ENCODE measurements at regions of chr6 and their contacts with region 1.

Region 1: DNA sequence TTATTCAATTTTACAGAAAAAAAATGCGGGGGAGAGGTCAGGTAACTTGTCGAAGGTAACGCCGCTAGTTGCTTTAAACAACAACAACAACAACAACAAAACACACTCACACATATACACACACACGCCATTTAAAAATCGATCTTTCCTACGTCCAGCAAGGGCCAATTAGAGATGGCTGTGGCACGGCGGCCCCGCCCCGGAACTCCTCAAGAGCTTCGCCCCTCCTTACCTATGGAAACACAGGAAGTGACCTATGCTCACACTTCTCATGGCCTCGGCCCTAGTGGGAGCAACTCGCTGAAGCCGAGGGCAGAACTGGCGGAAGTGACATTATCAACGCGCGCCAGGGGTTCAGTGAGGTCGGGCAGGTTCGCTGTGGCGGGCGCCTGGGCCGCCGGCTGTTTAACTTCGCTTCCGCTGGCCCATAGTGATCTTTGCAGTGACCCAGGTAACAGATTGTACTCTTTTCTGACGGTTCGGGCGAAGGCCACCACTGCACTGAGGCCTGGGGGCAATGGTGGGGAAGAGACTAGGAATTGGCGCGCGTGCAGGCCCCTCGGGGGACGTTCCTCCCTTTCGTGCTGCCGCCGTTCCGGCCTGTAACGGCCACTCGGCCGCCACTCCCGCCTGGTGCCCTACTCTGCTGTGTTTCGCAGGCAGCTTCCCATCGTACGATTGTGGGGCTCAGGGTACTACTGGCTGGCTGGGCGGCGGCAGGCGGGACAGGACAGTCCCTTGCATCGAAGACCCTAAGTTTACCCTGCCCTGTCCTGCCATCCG is at the start of gene TBP:
- DNase-seq: peak; percentile 93
- ATAC-seq: peak; percentile 94
- H3K4me3 Mint-ChIP-seq: no peak within 1 kb of the TSS
- H3K27ac Mint-ChIP-seq: no peak within 1 kb of the TSS
- H3K4me1 Mint-ChIP-seq: peaks cover 25% of the 10 kb centered on the region
- H3K27me3 Mint-ChIP-seq: no peaks in the 10 kb centered on the region
- CTCF ChIP-seq: no peak
- total RNA-seq, gene TBP: 19.4 and 21.6 TPM in 2 replicates

Region 2: GRCh38 chr6:168596344-168596743 is 1957.9 kb before region 1 on chr6:
- CTCF ChIA-PET with region 1: no interaction called
- POLR2A ChIA-PET with region 1: no interaction called
- intact Hi-C with region 1: no loop called
- DNase-seq: no peak
- ATAC-seq: no peak
- H3K4me3 Mint-ChIP-seq: no peak overlapping the region
- H3K27ac Mint-ChIP-seq: no peak overlapping the region
- H3K4me1 Mint-ChIP-seq: no peaks in the 10 kb centered on the region
- H3K27me3 Mint-ChIP-seq: no peaks in the 10 kb centered on the region
- CTCF ChIP-seq: no peak

Region 3: DNA sequence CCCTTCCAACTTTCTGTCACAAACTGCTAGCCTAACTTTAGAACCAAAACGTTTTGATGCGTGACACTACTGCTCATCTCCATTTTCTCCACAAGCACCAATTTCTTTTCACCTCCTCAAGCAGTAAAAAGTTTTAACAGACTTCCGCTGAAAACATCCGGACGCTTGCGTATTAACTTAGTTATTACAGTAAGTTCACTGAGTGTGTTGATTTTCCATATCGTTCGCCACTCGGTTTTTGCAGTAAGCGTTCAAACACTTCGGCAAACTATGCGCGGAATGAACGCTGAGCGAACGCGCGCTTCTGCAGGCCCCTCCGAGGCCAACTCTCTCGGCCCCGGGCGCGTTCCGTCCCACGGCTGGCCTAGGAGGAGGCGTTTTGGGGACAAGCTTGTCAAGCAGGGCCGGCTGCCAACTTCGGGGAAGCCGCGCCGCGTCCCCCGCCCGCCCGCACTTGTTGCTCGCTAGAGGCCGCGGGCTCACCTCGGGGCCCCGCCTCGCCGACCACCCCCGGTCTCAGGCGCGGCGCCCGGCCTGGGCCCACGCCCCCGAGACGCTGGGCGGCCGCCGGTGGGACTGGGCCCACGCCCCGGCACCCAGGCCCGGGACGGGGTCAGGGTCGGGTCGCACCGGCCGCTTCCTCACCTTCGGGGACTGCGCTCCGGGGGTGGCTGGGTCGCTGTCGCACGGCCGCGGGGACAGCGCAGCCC is 830.8 kb before region 1 on chr6:
- CTCF ChIA-PET with region 1: no interaction called
- POLR2A ChIA-PET with region 1: interaction called, 7 read pairs
- intact Hi-C with region 1: loop called (anchors 1 kb)
- DNase-seq: peak; percentile 76
- ATAC-seq: peak; percentile 45
- H3K4me3 Mint-ChIP-seq: peak overlapping the region; percentile 82
- H3K27ac Mint-ChIP-seq: peak overlapping the region; percentile 89
- H3K4me1 Mint-ChIP-seq: peaks cover 30% of the 10 kb centered on the region
- H3K27me3 Mint-ChIP-seq: no peaks in the 10 kb centered on the region
- CTCF ChIP-seq: no peak

Region 4: GRCh38 chr6:169751242-169752073 is 802.7 kb before region 1 on chr6 and contains the starts of genes DYNLT2 and ERMARD:
- CTCF ChIA-PET with region 1: no interaction called
- POLR2A ChIA-PET with region 1: interaction called, 32 read pairs
- intact Hi-C with region 1: loop called (anchors 1 kb)
- DNase-seq: peak; percentile 98
- ATAC-seq: peak; percentile 93
- H3K4me3 Mint-ChIP-seq: peak within 1 kb of the TSS; percentile 95
- H3K27ac Mint-ChIP-seq: peak within 1 kb of the TSS; percentile 97
- H3K4me1 Mint-ChIP-seq: peaks cover 30% of the 10 kb centered on the region
- H3K27me3 Mint-ChIP-seq: no peaks in the 10 kb centered on the region
- CTCF ChIP-seq: no peak
- total RNA-seq, gene DYNLT2: 3.7 and 4.4 TPM in 2 replicates
- total RNA-seq, gene ERMARD: 33.5 and 45.4 TPM in 2 replicates

Region 5: DNA sequence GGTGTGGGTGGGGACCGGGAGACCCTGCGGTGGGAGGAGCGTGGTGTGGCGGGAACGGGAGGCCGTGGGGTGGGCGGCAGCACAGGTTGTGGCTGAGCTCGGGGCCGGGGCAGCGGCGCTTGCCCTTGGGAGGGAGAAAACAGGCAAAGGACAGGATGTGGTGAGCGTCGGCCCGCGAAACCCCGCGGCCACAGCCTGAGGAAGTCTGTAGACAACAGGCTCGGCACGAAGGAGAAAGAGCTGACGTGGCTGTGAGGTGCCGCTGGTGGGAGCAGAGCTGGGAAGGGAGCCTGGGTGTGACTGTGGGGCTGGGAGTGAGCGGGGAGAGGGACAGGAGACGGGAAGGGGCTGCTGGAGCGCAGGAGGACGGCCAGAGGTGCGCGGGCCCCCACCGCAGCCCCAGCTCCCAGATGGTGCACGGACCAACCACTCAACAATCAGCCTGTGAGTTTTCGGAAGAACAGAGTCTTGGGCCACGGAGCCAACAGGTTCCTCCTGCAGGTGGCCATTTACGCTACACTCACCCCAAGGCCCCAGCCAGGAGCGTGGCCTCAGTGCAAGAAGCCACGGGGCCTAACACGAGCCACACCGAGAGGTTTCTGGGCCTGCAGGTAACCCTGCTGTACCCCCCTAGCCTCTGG is 466.1 kb before region 1 on chr6:
- CTCF ChIA-PET with region 1: no interaction called
- POLR2A ChIA-PET with region 1: no interaction called
- intact Hi-C with region 1: loop called (anchors 5 kb)
- DNase-seq: peak; percentile 44
- ATAC-seq: peak; percentile 57
- H3K4me3 Mint-ChIP-seq: peak overlapping the region; percentile 82
- H3K27ac Mint-ChIP-seq: peak overlapping the region; percentile 85
- H3K4me1 Mint-ChIP-seq: peaks cover 30% of the 10 kb centered on the region
- H3K27me3 Mint-ChIP-seq: no peaks in the 10 kb centered on the region
- CTCF ChIP-seq: no peak

Region 6: DNA sequence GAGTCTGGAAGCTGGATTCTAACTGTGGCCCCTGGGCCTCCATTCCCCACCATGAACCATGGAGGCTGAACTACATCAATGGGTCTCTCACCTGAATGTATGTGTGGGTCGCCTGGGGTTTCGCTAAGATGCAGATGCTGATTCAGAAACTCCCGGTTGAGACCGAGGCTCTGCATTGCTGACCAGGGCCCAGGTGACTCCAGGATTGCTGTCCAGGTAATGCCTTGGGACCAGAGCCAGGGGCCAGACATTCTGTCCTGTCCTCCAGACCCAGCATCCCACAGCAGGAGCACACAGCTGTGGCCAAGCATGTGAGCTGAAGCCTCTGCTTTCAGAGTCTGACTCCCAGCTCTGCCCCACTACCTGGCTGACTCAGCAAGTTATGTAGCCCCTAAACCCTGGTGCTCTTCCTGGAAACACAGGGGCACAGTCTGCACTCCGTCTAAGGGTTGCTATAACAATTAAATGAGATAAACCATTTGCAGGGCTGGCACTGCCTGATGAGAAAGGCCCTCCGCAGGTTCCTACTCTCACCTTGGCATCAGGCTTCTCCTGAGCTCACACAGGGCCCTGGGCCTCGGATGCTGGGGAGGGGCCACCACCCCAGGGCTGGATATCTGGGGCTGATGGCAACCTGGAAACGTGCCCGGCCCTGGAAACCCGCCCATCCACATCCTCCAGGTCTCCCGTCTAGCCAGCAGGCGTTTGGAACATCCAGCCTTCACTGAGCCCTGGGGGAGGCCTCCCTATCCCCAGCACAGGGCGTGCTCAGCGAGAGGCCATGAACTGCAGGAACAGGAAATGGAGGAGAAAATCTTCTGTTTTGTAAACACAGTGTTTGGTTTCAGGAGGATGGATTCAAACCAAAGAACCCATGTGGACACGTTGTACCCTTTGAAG is 439.0 kb before region 1 on chr6:
- CTCF ChIA-PET with region 1: no interaction called
- POLR2A ChIA-PET with region 1: no interaction called
- intact Hi-C with region 1: no loop called
- DNase-seq: no peak
- ATAC-seq: no peak
- H3K4me3 Mint-ChIP-seq: no peak overlapping the region
- H3K27ac Mint-ChIP-seq: no peak overlapping the region
- H3K4me1 Mint-ChIP-seq: no peaks in the 10 kb centered on the region
- H3K27me3 Mint-ChIP-seq: peaks cover 6% of the 10 kb centered on the region
- CTCF ChIP-seq: no peak

Region 7: DNA sequence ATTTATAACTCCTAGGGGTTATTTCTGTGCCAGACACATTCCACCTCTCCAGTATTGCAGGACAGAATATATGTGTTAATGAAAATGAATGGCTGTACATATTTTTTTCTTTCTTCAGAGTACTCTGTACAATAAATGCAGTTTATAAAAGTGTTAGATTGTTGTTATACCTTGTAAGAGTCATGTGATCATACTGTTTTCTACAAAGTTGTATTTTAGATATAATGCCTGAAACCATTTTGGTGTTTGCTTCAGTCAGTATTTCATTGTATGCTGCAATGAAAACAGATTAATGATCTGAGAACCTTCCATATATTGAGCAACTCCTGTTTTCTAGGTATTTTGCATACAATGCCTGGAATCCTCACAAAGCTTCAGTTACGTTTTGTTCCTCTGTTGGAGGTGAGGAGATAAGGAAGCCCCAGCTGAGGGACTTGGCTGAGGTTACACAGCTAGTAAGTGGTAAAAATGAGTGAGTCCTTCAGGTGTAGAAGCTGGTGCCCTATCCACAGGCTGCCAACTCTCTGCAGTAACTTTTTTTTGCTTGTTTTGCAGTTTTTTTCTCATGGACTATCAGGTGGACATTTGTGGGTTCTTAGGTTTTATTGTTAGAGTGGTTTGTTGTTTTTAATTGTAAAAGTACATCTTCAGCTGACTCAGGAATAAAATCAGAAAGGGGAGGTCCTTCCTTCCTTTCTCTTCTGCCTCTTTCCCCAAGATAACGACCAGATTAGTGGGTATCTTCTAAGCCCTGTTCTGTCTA is 18.7 kb after region 1 on chr6:
- CTCF ChIA-PET with region 1: no interaction called
- POLR2A ChIA-PET with region 1: interaction called, 3 read pairs
- intact Hi-C with region 1: loop called (anchors 2 kb)
- DNase-seq: no peak
- ATAC-seq: no peak
- H3K4me3 Mint-ChIP-seq: no peak overlapping the region
- H3K27ac Mint-ChIP-seq: no peak overlapping the region
- H3K4me1 Mint-ChIP-seq: no peaks in the 10 kb centered on the region
- H3K27me3 Mint-ChIP-seq: no peaks in the 10 kb centered on the region
- CTCF ChIP-seq: no peak

Region 8: GRCh38 chr6:170584181-170584953 is 30.2 kb after region 1 on chr6 and contains the start of gene PDCD2:
- CTCF ChIA-PET with region 1: interaction called, 10 read pairs
- POLR2A ChIA-PET with region 1: interaction called, 40 read pairs
- intact Hi-C with region 1: loop called (anchors 1 kb)
- DNase-seq: peak; percentile 86
- ATAC-seq: peak; percentile 95
- H3K4me3 Mint-ChIP-seq: peak within 1 kb of the TSS; percentile 98
- H3K27ac Mint-ChIP-seq: peak within 1 kb of the TSS; percentile 94
- H3K4me1 Mint-ChIP-seq: peaks cover 20% of the 10 kb centered on the region
- H3K27me3 Mint-ChIP-seq: no peaks in the 10 kb centered on the region
- CTCF ChIP-seq: no peak
- total RNA-seq, gene PDCD2: 88.4 and 90.8 TPM in 2 replicates

Measured in activated B cell treated with CpG ODN at 0.5 μM for 24 hours (primary cell).